Activated CD8-positive, alpha-beta T cell treated with anti-CD3 and anti-CD28 coated beads for 36 hours (primary cell): ENCODE measurements at regions of chr1 and their contacts with region 1.

Region 1: GRCh38 chr1:202160377-202160940 is at the start of gene PTPN7:
- DNase-seq: peak; percentile 96
- ATAC-seq: peak; percentile 52
- H3K4me3 Mint-ChIP-seq: peak within 1 kb of the TSS; percentile 95
- H3K27ac Mint-ChIP-seq: peak within 1 kb of the TSS; percentile 95
- H3K4me1 Mint-ChIP-seq: peaks cover 64% of the 10 kb centered on the region
- H3K27me3 Mint-ChIP-seq: no peaks in the 10 kb centered on the region
- CTCF ChIP-seq: peak; percentile 85
- total RNA-seq, gene PTPN7: 195 to 200 TPM

Region 2: DNA sequence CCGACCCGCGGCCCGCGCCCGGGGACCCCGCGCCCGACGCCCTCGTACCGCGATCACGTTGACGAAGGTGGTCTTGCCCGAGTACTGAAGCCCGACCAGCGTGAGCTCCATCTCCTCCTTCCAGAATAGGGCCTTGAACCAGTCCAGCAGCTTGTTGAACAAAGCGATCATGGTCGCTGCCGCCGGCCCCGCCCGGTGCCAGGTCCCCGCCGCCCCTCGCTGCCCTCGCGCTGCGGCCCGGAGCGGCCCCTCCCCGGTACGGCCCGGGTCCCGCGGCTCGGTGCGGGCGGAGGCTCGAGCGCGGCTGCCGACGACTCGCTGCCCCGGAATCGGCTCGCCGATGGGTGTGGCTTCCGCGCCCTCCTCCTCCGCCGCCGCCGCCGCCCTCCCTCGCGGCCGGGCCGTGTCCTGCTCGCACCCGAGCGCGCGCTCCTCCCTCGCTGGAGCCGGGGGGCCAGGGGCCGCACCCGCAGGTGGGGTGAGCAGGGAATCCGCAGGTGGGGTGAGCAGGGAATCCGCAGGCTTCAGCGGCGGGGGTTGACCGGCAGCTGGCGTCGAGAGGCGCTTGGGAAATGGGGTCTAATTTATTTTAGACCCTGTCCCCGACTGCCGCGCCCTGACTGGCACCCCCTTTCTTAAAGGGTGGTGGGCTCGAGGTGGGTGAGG is 15.9 kb before region 1 on chr1 and contains the start of gene ARL8A:
- CTCF ChIA-PET with region 1: interaction called, 38 read pairs
- POLR2A ChIA-PET with region 1: interaction called, 124 read pairs
- intact Hi-C with region 1: no loop called
- DNase-seq: peak; percentile 73
- ATAC-seq: peak; percentile 69
- H3K4me3 Mint-ChIP-seq: peak within 1 kb of the TSS; percentile 95
- H3K27ac Mint-ChIP-seq: peak within 1 kb of the TSS; percentile 94
- H3K4me1 Mint-ChIP-seq: peaks cover 34% of the 10 kb centered on the region
- H3K27me3 Mint-ChIP-seq: no peaks in the 10 kb centered on the region
- CTCF ChIP-seq: no peak
- total RNA-seq, gene ARL8A: 25.8 to 33.7 TPM

Region 3: GRCh38 chr1:202176949-202177927 is 16.8 kb after region 1 on chr1:
- CTCF ChIA-PET with region 1: interaction called, 23 read pairs
- POLR2A ChIA-PET with region 1: interaction called, 16 read pairs
- intact Hi-C with region 1: no loop called
- DNase-seq: no peak
- ATAC-seq: no peak
- H3K4me3 Mint-ChIP-seq: no peak overlapping the region
- H3K27ac Mint-ChIP-seq: no peak overlapping the region
- H3K4me1 Mint-ChIP-seq: no peaks in the 10 kb centered on the region
- H3K27me3 Mint-ChIP-seq: no peaks in the 10 kb centered on the region
- CTCF ChIP-seq: no peak

Region 4: DNA sequence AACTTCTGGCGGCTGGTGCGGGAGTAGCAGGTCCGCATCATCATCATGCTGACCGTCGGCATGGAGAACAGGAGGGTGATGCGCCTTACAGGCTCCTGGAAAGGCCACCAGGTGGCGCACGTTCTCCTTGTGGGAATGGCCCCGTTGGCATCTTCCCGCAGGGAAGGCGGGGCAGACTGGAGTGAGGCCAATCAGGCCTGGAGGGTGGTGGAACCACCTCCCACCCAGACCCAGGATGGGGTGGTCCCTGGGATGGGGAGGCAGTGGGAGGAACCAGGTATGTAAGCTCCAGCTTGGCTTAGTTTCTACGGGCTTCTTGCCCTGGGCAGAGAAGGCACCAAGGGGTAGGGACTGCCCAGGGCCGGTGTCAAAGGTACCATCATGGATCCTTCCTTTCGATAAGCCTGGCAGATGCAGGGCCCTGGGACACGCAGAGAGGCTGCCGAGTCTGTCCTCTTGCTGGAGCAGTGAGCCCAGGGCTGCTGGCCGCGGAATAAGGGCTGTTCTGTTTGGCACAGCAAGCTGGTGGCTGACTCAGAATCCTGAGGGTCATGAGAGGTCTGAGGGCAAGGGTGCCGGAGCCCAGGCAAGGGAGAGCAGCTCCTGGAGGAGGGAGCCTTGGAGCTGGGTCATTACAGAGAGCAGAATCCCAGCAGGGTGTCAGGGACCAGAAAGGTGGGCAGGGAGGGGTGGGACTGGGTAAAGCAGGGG is 24.4 kb after region 1 on chr1:
- CTCF ChIA-PET with region 1: interaction called, 23 read pairs
- POLR2A ChIA-PET with region 1: interaction called, 4 read pairs
- intact Hi-C with region 1: loop called (anchors 2 kb)
- DNase-seq: peak; percentile 80
- ATAC-seq: peak; percentile 62
- H3K4me3 Mint-ChIP-seq: no peak overlapping the region
- H3K27ac Mint-ChIP-seq: no peak overlapping the region
- H3K4me1 Mint-ChIP-seq: peaks cover 14% of the 10 kb centered on the region
- H3K27me3 Mint-ChIP-seq: no peaks in the 10 kb centered on the region
- CTCF ChIP-seq: peak; percentile 89